ENCODE measurements at regions of chr20 and their contacts with region 1.

Region 1: DNA sequence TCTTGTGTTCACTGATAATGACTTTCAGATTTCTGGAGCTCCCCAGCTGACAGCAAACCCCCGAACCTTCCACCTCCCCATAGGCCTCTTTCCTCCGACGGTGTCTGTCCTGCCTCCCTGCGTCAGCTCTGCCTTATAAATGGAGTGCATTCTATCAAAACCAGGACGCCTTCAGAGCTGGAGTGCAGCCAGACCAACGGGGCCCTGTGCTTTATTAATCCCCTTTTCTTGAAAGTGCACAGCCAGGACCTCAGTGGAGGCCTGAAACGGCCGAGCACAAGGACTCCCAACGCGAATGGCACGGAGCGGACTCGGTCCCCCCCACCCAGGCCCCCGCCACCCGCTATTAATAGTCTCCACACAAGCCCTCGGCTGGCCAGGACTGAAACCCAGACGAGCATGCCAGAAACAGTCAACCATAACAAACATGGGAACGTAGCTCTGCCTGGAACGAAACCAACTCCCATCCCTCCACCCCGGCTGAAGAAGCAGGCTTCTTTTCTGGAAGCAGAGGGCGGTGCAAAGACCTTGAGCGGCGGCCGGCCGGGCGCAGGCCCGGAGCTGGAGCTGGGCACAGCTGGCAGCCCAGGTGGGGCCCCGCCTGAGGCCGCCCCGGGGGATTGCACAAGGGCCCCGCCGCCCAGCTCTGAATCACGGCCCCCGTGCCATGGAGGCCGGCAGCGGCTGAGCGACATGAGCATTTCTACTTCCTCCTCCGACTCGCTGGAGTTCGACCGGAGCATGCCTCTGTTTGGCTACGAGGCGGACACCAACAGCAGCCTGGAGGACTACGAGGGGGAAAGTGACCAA is 42.3 kb upstream of the NAA20 start:
- DNase-seq: peak; percentile 97
- H3K4me3 ChIP-seq: peak overlapping the region; percentile 48 to 66 (median 57)
- H3K27ac ChIP-seq: peak overlapping the region; percentile 87 to 97 (median 88)
- H3K4me1 ChIP-seq: peaks cover 0 to 63% (median 49%) of the 10 kb centered on the region in 4 donors
- H3K27me3 ChIP-seq: no peaks in the 10 kb centered on the region
- CTCF ChIP-seq: no peak
- EP300 ChIP-seq: peak in 2 of 4 donors; percentile 25 to 50
- POLR2A ChIP-seq: peak; percentile 25 to 42

Region 2: DNA sequence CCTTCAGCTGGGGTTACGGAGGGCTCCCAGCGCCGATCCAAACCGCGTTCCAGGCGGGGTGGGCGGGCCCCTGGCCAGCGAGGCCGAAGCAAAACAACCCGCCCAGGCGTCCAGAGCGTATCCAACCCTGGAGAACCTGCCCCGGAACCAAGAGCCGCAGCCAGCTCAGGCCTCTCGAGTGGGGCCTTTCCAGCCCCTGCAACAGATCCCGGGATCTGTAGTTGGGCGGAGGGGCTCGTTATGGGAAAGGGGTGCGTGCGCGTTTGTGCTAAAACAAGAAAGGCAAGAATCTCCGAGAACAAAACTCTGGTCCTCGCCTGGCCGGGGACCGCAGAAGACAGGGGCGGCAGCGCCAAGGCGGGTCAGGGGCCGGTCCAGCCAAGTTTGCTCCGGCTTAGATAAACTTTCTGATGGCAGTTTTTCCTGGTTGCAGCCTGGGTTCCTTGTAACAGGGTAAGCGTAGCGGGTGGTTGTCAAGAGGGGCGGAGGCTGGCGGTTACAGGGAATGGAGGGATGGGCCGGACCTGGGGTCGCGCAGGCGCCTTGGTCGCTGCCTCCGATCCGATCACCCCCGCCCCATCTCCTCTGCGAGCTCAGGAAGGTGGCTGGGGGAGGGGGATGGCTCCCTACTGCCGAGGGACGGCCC is 217.2 kb before region 1 on chr20:
- intact Hi-C with region 1: loop called (anchors 5 kb)
- DNase-seq: peak; percentile 96
- H3K4me3 ChIP-seq: peak overlapping the region; percentile 71 to 94 (median 84)
- H3K27ac ChIP-seq: peak overlapping the region; percentile 92 to 96 (median 94)
- H3K4me1 ChIP-seq: peaks cover 0 to 33% (median 29%) of the 10 kb centered on the region in 4 donors
- H3K27me3 ChIP-seq: no peaks in the 10 kb centered on the region
- CTCF ChIP-seq: no peak
- EP300 ChIP-seq: no peak
- POLR2A ChIP-seq: peak; percentile 31 to 36

Region 3: DNA sequence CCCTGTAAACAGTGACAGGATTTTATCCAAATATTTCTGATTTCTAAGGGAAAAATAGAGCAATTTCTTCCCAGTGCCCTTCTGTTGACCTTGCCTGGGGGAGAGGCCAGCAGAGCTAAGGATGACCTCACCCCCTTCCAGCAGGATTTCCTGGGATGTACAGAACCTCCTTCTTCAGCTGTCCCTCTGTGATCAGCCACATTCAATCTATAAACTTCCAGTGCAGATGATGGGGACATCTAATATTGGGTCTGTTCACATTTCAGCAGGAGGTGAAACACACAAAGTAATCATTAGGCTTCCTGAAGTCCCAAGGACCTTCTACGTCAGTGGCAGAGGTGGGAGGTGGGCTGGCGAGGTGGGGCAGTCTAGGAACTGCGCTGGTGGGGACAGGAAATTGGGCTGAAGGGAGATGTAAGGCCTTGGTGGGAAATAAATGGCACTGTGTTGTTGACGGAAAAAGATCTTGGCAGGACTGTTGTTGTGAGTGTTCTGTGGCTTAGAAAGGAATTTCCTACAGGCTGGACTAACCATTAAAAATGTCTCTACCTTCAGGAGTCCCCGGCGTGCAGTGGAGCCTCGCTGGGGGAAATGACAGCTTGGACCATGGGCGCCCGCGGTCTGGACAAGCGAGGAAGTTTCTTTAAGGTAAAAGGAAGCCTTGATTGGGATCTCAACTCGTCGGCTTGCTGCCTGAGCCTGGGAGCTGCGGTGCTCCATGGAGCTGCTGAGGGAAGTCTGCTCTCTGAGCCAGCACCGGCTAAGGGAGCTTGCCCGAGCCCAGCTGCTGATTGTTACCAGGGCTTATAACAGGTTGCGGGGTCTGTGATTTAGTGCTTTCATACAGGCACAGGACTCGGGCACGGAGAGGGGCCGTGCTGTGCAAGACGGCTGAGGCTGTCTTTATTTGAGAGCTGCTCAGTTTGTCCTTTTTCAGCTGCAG is 85.5 kb before region 1 on chr20:
- intact Hi-C with region 1: loop called (anchors 2 kb)
- DNase-seq: peak; percentile 77
- H3K4me3 ChIP-seq: peak overlapping the region in 3 of 4 donors; percentile 33 to 43 (median 35)
- H3K27ac ChIP-seq: peak overlapping the region; percentile 80 to 87 (median 85)
- H3K4me1 ChIP-seq: peaks cover 0 to 64% (median 53%) of the 10 kb centered on the region in 4 donors
- H3K27me3 ChIP-seq: no peaks in the 10 kb centered on the region
- CTCF ChIP-seq: no peak
- EP300 ChIP-seq: no peak
- POLR2A ChIP-seq: no peak

Region 4: GRCh38 chr20:19934792-19935491 is 39.9 kb before region 1 on chr20:
- intact Hi-C with region 1: loop called (anchors 5 kb)
- DNase-seq: peak; percentile 79
- H3K4me3 ChIP-seq: peak overlapping the region in 3 of 4 donors; percentile 19 to 26 (median 22)
- H3K27ac ChIP-seq: peak overlapping the region; percentile 56 to 79 (median 64)
- H3K4me1 ChIP-seq: peaks cover 0 to 34% (median 30%) of the 10 kb centered on the region in 4 donors
- H3K27me3 ChIP-seq: no peaks in the 10 kb centered on the region
- CTCF ChIP-seq: no peak
- EP300 ChIP-seq: no peak
- POLR2A ChIP-seq: peak; percentile 16 to 38

Region 5: DNA sequence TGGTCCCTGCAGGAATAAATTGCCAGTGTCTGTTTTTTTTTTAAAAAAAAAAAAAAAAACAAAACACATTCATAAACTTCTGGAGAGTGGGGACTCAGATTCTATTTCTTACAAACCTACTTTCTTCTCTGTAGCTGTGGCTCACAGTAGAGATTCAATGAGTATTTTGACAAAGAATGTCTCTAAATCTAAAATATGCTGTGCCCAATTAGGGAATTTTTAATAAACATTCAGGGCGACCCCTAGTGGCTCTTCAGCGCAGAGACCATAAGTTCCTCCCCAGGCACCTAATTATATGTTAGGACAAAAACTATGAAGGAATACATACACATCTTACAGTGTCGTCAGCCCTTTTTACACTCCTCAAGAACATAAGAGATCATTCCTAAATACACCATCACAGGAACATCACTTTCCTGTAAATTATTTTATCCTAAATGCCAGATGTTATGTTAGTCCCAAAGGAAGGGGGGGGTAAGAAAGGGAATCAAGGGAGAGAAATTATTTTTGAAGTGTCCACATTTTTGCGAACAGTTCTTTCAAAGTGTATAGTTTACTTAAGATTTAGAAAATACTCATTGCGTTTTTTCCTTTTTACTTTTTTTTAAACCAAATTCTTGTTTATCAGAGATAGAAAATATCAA is 20.5 kb after region 1 on chr20:
- intact Hi-C with region 1: loop called (anchors 2 kb)
- DNase-seq: no peak
- H3K4me3 ChIP-seq: no peak overlapping the region
- H3K27ac ChIP-seq: peak overlapping the region in 3 of 4 donors; percentile 76 to 87 (median 83)
- H3K4me1 ChIP-seq: peaks cover 0 to 71% (median 47%) of the 10 kb centered on the region in 4 donors
- H3K27me3 ChIP-seq: no peaks in the 10 kb centered on the region
- CTCF ChIP-seq: peak; percentile 49 to 83 (median 72)
- EP300 ChIP-seq: no peak
- POLR2A ChIP-seq: no peak